OCI-LY7 (cell line): ENCODE measurements at regions of chr19 and their contacts with region 1.

Region 1: DNA sequence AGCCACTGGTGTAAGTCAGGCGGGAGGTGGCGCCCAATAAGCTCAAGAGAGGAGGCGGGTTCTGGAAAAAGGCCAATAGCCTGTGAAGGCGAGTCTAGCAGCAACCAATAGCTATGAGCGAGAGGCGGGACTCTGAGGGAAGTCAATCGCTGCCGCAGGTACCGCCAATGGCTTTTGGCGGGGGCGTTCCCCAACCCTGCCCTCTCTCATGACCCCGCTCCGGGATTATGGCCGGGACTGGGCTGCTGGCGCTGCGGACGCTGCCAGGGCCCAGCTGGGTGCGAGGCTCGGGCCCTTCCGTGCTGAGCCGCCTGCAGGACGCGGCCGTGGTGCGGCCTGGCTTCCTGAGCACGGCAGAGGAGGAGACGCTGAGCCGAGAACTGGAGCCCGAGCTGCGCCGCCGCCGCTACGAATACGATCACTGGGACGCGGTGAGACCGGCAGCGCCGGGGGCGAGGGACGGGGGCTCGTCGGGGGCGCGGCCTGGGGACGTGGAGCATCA is at the start of gene ALKBH7:
- DNase-seq: peak; percentile 100
- H3K4me3 ChIP-seq: peak within 1 kb of the TSS; percentile 84
- H3K27ac ChIP-seq: peak within 1 kb of the TSS; percentile 85
- H3K4me1 ChIP-seq: peaks cover 13% of the 10 kb centered on the region
- CTCF ChIP-seq: no peak
- total RNA-seq, gene ALKBH7: 35.8 and 61.0 TPM in 2 replicates

Region 2: DNA sequence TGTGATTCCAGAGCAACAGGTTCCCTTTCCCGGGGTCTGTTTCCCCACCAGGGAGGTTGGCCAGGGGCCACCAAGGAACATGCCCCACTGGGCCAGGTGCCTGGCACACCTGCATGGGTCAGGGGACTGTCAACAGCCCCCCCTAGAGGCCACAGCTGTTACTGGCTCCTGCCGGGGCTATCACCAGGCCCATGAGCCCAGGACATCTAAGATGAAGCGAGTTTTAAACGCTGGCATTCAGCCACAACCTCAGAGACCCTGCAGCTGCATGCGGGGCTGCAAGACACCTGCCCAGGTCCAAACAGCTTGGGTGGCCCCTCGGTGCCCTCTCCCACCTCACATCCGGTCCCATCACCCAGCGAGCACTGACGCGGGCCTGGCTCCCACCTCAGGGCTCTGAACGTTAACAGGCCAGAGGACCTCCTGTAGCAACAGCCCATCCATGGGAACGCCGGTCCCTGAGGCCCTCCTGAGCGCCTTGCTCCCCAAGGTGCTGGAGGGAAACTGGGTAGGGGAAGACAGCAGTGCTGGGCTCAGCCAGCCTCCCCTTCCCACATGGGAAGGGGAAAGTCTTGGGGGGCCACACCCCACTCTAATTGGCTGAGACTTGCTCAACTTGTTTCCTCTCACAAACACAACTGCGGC is 39.9 kb after region 1 on chr19:
- CTCF ChIA-PET with region 1: no interaction called
- POLR2A ChIA-PET with region 1: no interaction called
- intact Hi-C with region 1: no loop called
- DNase-seq: peak; percentile 60
- H3K4me3 ChIP-seq: no peak overlapping the region
- H3K27ac ChIP-seq: no peak overlapping the region
- H3K4me1 ChIP-seq: no peaks in the 10 kb centered on the region
- CTCF ChIP-seq: peak; percentile 85

Region 3: DNA sequence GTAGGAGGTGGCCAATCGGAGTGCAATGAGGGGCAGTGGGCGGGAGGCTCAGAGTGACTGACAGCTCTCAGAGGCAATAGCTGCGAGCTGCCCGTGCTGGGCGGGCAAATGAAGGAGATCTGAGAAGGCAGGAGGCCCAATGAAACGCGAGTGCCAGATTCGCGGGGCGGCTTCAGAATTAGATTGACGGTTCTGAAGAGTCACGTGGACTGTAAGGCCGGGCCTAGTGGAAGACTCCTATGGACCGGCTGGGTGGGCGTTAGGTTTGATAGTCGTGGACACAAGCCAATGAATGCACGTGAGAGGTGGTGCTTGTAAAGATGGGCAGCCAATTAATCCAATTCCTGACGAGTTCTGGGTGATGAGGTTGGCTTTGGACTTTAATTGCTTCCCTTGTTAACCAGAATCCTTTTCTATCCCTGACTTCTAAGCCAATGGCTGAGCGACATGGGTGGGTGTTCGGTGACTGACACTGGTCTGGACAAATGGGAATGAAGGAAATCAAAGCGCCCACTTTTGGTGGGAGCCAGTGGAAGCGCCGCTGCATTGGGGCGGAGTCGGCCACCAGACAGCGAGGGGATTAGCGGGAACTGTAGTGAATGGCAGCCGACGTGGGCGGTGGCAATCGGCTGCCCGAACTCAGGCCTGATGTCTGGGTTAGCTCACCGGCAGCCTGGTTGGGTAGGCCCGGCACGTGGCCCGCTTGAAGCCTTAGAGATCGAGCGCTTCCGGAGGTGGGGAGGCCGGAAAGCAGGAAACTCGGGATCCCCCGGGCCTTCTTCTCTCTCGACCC is 52.5 kb after region 1 on chr19:
- CTCF ChIA-PET with region 1: no interaction called
- POLR2A ChIA-PET with region 1: interaction called, 5 read pairs
- intact Hi-C with region 1: loop called (anchors 2 kb)
- DNase-seq: peak; percentile 100
- H3K4me3 ChIP-seq: peak overlapping the region; percentile 40
- H3K27ac ChIP-seq: peak overlapping the region; percentile 48
- H3K4me1 ChIP-seq: peaks cover 26% of the 10 kb centered on the region
- CTCF ChIP-seq: no peak